Gastrocnemius medialis (tissue), 4 donors: ENCODE measurements at regions of chr22 and their contacts with region 1.

Region 1: GRCh38 chr22:39532215-39533071 is at the start of gene RPS19BP1:
- DNase-seq: peak; percentile 99 to 100
- ATAC-seq: peak; percentile 93 to 97
- H3K4me3 ChIP-seq: peak within 1 kb of the TSS; percentile 81 to 98 (median 86)
- H3K27ac ChIP-seq: peak within 1 kb of the TSS; percentile 92 to 98 (median 94)
- H3K4me1 ChIP-seq: peaks cover 45 to 48% of the 10 kb centered on the region in 2 donors
- H3K27me3 ChIP-seq: no peaks in the 10 kb centered on the region
- CTCF ChIP-seq: peak in 1 of 5 experiments; percentile 15
- POLR2A ChIP-seq: peak; percentile 87 to 94
- total RNA-seq, gene RPS19BP1: 72.2 to 128 (median 104) TPM

Region 2: DNA sequence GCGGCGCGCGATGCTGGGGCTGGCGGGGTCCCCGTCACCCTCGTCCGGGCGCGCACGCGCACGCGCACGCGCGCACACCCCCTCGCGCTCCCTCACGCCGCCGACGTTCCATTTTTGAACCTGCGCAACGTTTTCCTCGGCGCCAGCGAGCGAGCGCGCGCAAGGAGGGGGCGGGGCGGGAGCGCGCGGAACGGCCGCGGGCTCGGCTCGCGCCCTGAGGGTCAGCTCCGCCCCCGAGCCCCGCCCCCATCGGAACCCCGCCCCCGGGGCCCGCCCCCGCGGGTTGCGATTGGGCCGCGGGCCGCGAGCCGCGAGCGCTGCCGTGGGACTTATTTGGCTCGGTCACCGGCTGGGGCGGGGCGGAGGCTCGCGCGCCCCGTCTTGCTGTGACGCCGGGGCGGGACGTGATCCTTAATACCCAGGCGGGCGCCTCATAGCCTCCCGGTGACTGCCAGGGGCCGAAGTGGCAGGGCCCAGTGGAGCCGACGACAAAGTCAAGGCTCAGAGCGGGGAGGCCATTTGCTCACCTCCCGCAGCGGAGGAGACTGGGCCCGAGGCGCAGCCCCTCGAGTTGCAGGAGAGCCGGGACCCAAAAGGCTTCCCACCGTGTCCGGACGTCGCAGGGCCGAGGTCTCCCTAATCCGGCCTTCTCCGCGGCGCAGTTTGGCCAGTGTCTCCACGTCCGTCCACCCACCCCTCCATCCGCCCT is 379.8 kb before region 1 on chr22 and contains the start of gene CBX7:
- in situ Hi-C with region 1: no loop called
- intact Hi-C with region 1: loop called (anchors 5 kb)
- DNase-seq: peak; percentile 90 to 95
- ATAC-seq: peak; percentile 79 to 87
- H3K4me3 ChIP-seq: peak within 1 kb of the TSS; percentile 85 to 98 (median 97)
- H3K27ac ChIP-seq: peak within 1 kb of the TSS; percentile 94 to 99 (median 98)
- H3K4me1 ChIP-seq: peaks cover 29 to 31% of the 10 kb centered on the region in 2 donors
- H3K27me3 ChIP-seq: no peaks in the 10 kb centered on the region
- CTCF ChIP-seq: no peak
- POLR2A ChIP-seq: peak; percentile 87 to 96
- total RNA-seq, gene CBX7: 52.4 to 78.1 (median 62.3) TPM

Region 3: DNA sequence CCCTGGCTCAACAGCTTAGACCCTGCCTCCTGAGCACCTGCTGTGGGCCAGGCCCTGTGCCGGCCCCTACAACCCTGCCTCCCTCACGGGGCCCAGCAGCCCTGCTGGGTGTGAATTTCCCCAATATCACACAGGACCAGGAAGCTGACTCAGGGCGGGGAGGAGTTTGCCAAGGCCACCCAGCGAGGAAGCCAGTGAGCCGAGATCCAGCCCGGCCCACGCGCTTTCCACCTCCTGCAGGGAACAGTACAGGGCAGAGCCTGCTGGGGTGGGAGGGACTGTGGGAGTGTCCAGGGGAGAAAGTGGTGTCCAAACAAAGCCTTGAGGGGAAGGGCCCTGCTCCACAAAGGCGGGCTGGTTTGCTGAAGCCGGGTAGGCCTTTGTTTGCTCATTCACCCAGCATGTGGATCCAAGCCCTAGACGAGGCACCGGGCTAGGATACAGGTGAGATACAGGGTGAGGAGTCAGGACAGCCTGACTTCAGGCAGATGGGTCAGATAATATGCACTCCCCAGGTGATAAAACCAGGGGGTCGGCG is 239.8 kb before region 1 on chr22:
- in situ Hi-C with region 1: no loop called
- intact Hi-C with region 1: no loop called
- DNase-seq: peak; percentile 71 to 78
- ATAC-seq: peak; percentile 60 to 65
- H3K4me3 ChIP-seq: no peak overlapping the region
- H3K27ac ChIP-seq: peak overlapping the region; percentile 77 to 83 (median 80)
- H3K4me1 ChIP-seq: peaks cover 37 to 39% of the 10 kb centered on the region in 2 donors
- H3K27me3 ChIP-seq: no peaks in the 10 kb centered on the region
- CTCF ChIP-seq: no peak
- POLR2A ChIP-seq: peak; percentile 34 to 56

Region 4: GRCh38 chr22:39319270-39320022 is 213.0 kb before region 1 on chr22 and contains the start of gene RPL3:
- in situ Hi-C with region 1: no loop called
- intact Hi-C with region 1: loop called (anchors 1 kb)
- DNase-seq: peak; percentile 93 to 96
- ATAC-seq: peak; percentile 84 to 87
- H3K4me3 ChIP-seq: peak within 1 kb of the TSS; percentile 65 to 91 (median 84)
- H3K27ac ChIP-seq: peak within 1 kb of the TSS; percentile 86 to 98 (median 91)
- H3K4me1 ChIP-seq: peaks cover 42 to 44% of the 10 kb centered on the region in 2 donors
- H3K27me3 ChIP-seq: no peaks in the 10 kb centered on the region
- CTCF ChIP-seq: peak in 2 of 5 experiments; percentile 37 to 46
- POLR2A ChIP-seq: peak; percentile 94 to 96
- total RNA-seq, gene RPL3: 261 to 680 (median 391) TPM

Region 5: GRCh38 chr22:39405346-39406085 is 126.9 kb before region 1 on chr22:
- in situ Hi-C with region 1: loop called in 1 of 4 experiments (anchors 10 kb)
- intact Hi-C with region 1: no loop called
- DNase-seq: no peak
- ATAC-seq: peak in 1 of 2 donors; percentile 21
- H3K4me3 ChIP-seq: no peak overlapping the region
- H3K27ac ChIP-seq: peak overlapping the region in 1 of 4 donors; percentile 38
- H3K4me1 ChIP-seq: peaks cover 27 to 29% of the 10 kb centered on the region in 2 donors
- H3K27me3 ChIP-seq: no peaks in the 10 kb centered on the region
- CTCF ChIP-seq: no peak
- POLR2A ChIP-seq: no peak

Region 6: DNA sequence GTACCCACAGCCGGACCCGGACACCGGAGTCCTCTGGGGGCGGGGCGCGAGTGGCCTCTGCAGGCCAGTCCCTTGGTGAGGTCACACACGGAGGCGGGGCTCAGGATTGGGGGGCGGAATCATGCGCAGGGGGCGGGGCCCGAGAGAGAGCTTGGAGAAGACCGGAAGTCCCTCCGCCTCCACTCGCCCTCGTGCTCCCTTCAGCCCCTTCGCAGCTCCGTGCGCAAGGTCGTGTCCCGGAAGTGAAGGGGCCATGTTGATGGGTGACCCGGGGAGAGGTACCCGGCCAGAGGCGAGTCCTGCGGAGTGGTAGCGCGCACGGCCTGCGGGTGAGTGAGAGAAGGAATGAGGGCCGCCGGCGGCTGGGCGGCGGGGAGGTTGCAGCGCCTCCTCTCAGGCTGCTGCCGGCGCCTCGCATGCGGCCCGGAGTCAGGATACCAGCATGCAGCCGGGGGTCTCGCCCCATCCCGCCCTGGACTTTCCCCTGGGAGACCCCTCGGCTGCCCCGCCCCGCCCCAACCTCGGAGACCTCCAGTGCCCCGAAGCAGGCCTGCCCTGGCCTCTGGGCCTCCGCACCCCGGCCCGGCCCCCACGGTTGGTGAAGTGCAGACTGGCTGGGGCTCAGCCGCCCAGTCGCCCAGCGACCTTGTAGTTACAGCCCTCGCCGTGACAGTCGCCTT is 30.2 kb before region 1 on chr22 and contains the start of gene MIEF1:
- in situ Hi-C with region 1: no loop called
- intact Hi-C with region 1: loop called (anchors 1 kb)
- DNase-seq: peak; percentile 97 to 98
- ATAC-seq: peak; percentile 95 to 97
- H3K4me3 ChIP-seq: peak within 1 kb of the TSS; percentile 89 to 94 (median 90)
- H3K27ac ChIP-seq: peak within 1 kb of the TSS; percentile 85 to 95 (median 90)
- H3K4me1 ChIP-seq: peaks cover 29 to 35% of the 10 kb centered on the region in 2 donors
- H3K27me3 ChIP-seq: no peaks in the 10 kb centered on the region
- CTCF ChIP-seq: no peak
- POLR2A ChIP-seq: peak; percentile 47 to 76
- total RNA-seq, gene MIEF1: 11.4 to 25.4 (median 12.9) TPM

Region 7: DNA sequence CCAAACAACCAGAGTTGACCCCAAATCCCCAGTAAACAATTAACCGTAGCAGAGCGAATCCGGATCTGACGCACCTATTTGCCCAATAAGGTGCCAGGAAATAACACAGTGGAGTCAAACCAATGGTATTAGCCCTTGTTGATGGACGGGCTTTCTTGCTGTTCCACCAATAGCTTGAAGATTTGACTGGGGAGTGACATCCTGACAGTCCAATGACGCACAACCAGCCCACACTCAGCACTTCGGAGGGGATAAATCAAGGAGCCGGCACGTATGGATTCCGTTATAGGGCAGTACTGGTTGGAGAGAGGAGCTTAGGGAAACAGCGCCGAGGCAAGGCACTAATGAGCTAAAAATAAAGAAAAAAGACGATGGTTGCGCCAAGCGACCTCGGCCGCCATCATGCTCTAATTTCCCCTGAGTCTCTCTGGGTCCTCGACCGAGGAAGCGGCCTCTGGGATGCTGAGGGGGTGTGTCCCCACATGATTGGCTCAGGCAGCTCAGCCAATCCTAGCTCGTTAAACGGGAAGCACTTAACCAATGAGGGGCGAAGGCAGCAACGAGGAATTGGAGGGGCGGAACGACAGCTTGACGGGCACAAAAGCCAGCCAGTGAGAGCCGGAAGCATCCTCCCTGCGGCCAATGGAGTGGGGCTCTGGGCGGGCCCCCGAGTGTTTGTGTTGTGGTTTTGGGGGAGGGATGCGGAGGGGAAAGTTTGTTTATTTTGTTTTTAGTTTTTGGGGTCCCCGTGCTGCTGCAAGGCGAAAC is 511.8 kb after region 1 on chr22:
- in situ Hi-C with region 1: loop called in 1 of 4 experiments (anchors 25 kb)
- intact Hi-C with region 1: loop called (anchors 5 kb)
- DNase-seq: peak; percentile 99
- ATAC-seq: peak; percentile 91 to 92
- H3K4me3 ChIP-seq: peak overlapping the region; percentile 72 to 86 (median 76)
- H3K27ac ChIP-seq: peak overlapping the region; percentile 91 to 98 (median 94)
- H3K4me1 ChIP-seq: peaks cover 41 to 47% of the 10 kb centered on the region in 2 donors
- H3K27me3 ChIP-seq: no peaks in the 10 kb centered on the region
- CTCF ChIP-seq: no peak
- POLR2A ChIP-seq: peak; percentile 72 to 92